B cell (primary cell): ENCODE measurements at regions of chr4 and their contacts with region 1.

Region 1: DNA sequence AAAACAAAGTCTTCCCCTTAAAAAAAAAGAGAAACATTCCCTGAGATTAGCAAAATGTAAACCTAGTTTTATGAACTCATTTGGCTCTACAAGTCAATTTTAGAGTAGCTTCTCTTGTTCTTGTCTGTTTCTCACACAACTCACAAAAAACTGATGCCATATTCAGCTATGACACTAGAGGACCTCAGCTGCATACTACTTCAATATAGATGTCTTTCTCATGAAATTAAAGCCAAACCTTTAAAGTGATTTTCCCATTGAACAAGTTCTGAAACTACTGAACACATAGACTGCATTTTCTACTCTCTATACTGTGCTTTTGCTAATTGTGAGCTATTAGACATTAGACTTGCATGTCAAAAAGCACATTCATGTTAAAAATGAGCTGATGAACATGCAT is 49.8 kb downstream of the TBCK start:
- DNase-seq: peak; percentile 13
- ATAC-seq: no peak
- H3K4me3 ChIP-seq: no peak overlapping the region
- H3K4me3 Mint-ChIP-seq: no peak overlapping the region
- H3K27ac ChIP-seq: no peak overlapping the region
- H3K27ac Mint-ChIP-seq: no peak overlapping the region
- H3K4me1 ChIP-seq: no peaks in the 10 kb centered on the region
- H3K4me1 Mint-ChIP-seq: no peaks in the 10 kb centered on the region
- H3K27me3 ChIP-seq: no peaks in the 10 kb centered on the region
- H3K27me3 Mint-ChIP-seq: no peaks in the 10 kb centered on the region
- CTCF ChIP-seq: peak; percentile 46

Region 2: GRCh38 chr4:106502106-106502699 is 236.0 kb after region 1 on chr4:
- CTCF ChIA-PET with region 1: no interaction called
- POLR2A ChIA-PET with region 1: no interaction called
- intact Hi-C with region 1: loop called (anchors 10 kb)
- DNase-seq: peak; percentile 7
- ATAC-seq: no peak
- H3K4me3 ChIP-seq: no peak overlapping the region
- H3K4me3 Mint-ChIP-seq: no peak overlapping the region
- H3K27ac ChIP-seq: no peak overlapping the region
- H3K27ac Mint-ChIP-seq: no peak overlapping the region
- H3K4me1 ChIP-seq: no peaks in the 10 kb centered on the region
- H3K4me1 Mint-ChIP-seq: peaks cover 4% of the 10 kb centered on the region
- H3K27me3 ChIP-seq: no peaks in the 10 kb centered on the region
- H3K27me3 Mint-ChIP-seq: peaks cover 10% of the 10 kb centered on the region
- CTCF ChIP-seq: peak; percentile 51